Prostate gland (tissue), 2 donors: ENCODE measurements at regions of chr12 and their contacts with region 1.

Region 1: DNA sequence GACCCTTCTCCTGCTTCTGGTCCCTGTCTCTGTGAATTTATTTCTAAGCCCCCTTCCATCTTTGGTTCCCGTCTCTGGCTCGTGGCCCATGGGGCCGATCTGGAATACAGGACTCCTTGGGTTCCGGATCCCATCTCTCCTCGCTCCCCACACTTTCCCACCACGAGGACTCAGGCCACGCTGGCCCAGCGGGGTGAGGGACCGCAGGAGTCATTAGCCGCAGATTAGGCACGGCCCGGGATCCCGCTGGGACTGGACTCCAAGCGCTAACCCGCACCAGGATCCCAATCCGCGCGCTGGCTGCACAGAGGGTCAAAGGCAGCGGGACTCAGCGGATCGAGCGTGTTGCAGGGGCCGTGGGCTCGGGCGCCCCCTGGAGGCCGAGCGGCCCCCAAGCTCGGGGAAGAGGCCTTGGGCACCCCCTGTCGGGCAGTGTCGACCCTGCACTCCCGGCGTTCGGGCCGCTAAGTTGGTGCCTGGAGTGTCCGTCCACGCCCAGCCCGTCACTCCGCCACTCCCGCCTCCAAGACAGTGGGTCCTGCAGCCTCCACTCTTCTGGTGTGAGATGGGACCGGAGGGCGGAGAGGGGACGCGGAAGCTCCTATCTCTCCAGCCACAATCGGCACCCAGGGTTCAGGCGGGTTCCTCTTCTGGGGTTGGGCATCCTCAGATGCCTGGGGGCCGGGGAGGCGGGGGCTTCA is 9.5 kb downstream of the SHMT2 start:
- DNase-seq: peak; percentile 78
- H3K4me3 ChIP-seq: peak overlapping the region; percentile 15 to 16
- H3K27ac ChIP-seq: no peak overlapping the region
- H3K4me1 ChIP-seq: peaks cover 30% of the 10 kb centered on the region
- H3K27me3 ChIP-seq: no peaks in the 10 kb centered on the region
- CTCF ChIP-seq: peak; percentile 99 to 100 (median 100)
- POLR2A ChIP-seq: no peak

Region 2: GRCh38 chr12:57214387-57214781 is 24.6 kb before region 1 on chr12:
- intact Hi-C with region 1: loop called (anchors 1 kb)
- DNase-seq: peak; percentile 53
- H3K4me3 ChIP-seq: no peak overlapping the region
- H3K27ac ChIP-seq: no peak overlapping the region
- H3K4me1 ChIP-seq: peaks cover 20% of the 10 kb centered on the region
- H3K27me3 ChIP-seq: peaks cover 1% of the 10 kb centered on the region
- CTCF ChIP-seq: peak in 3 of 4 experiments; percentile 66 to 79 (median 74)
- POLR2A ChIP-seq: no peak

Region 3: DNA sequence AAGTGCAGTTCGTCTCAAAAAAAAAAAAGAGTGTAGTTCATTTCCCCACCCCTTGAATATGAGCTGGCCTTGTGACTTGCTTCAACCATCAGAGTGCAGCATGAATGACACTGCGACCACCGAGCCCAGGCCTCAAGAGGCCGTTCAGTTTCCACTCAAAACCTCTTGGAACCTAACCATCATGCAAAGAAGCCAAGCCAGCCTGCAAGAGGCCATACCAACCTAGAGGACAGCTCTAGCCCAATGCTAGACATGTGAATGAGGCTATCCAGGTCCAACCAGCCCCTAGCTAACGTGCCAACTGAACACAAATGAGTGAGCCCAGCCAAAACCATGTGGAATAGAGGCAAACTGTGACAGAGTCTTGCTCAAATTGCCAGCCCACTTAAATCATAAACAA is 162.2 kb after region 1 on chr12:
- intact Hi-C with region 1: no loop called
- DNase-seq: no peak
- H3K4me3 ChIP-seq: no peak overlapping the region
- H3K27ac ChIP-seq: no peak overlapping the region
- H3K4me1 ChIP-seq: no peaks in the 10 kb centered on the region
- H3K27me3 ChIP-seq: no peaks in the 10 kb centered on the region
- CTCF ChIP-seq: no peak
- POLR2A ChIP-seq: no peak